ENCODE measurements at regions of chr5 and their contacts with region 1.

Region 1: DNA sequence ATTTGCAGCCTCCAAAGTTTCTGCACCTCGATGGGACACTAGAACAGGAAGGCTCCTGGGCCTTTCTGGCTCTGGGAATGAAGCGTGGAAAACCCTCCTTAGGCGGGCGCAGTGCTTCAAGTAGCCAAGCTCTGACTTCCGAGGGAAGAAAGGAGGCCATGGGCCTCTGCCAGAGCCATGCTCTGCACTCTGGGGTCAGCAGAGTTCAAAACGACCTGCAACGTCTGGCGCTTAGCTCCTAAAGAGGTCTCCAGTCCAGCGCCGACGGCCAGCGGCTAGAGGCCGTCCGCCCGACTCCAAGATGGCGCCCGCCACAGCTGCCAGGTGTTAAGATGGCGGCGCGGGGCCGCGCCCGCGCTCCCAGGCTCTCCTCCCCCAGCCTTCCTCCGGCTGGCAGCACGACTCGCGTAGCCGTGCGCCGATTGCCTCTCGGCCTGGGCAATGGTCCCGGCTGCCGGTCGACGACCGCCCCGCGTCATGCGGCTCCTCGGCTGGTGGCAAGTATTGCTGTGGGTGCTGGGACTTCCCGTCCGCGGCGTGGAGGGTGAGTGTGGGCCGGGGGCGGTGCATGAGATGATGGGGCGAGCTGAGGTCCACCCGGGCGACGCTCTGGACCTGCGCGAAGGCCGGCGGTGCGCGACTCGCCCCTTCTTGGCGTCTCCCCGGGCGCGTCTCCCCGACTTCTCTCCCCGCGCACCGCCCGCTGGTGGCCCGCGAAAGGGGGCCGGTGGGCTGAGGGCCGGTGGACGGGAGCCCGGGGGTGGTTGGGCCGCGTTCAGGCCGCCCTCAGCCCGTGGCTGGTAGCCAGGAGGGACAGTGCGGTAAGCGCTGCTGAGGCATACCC is at the start of gene TXNDC15:
- DNase-seq: peak; percentile 69 to 86 (median 78)
- ATAC-seq: peak; percentile 98
- H3K4me3 ChIP-seq: peak within 1 kb of the TSS; percentile 95
- H3K4me3 Mint-ChIP-seq: peak within 1 kb of the TSS; percentile 89 to 98 (median 94)
- H3K27ac ChIP-seq: peak within 1 kb of the TSS; percentile 88
- H3K27ac Mint-ChIP-seq: peak within 1 kb of the TSS; percentile 91 to 97 (median 95)
- H3K4me1 ChIP-seq: peaks cover 16 to 32% of the 10 kb centered on the region in 2 donors
- H3K4me1 Mint-ChIP-seq: peaks cover 31 to 51% (median 45%) of the 10 kb centered on the region in 7 donors
- H3K27me3 ChIP-seq: no peaks in the 10 kb centered on the region
- H3K27me3 Mint-ChIP-seq: no peaks in the 10 kb centered on the region
- total RNA-seq, gene TXNDC15: 24.2 to 71.3 (median 36.8) TPM

Region 2: GRCh38 chr5:134758504-134759341 is 115.5 kb before region 1 on chr5 and contains the start of gene DDX46:
- CTCF ChIA-PET with region 1: no interaction called
- POLR2A ChIA-PET with region 1: no interaction called
- intact Hi-C with region 1: loop called in 1 of 2 experiments (anchors 1 kb)
- DNase-seq: peak; percentile 85 to 95 (median 91)
- ATAC-seq: peak; percentile 99
- H3K4me3 ChIP-seq: peak within 1 kb of the TSS; percentile 75
- H3K4me3 Mint-ChIP-seq: peak within 1 kb of the TSS; percentile 92 to 100 (median 99)
- H3K27ac ChIP-seq: peak within 1 kb of the TSS; percentile 87
- H3K27ac Mint-ChIP-seq: peak within 1 kb of the TSS; percentile 93 to 99 (median 97)
- H3K4me1 ChIP-seq: peaks cover 12 to 13% of the 10 kb centered on the region in 2 donors
- H3K4me1 Mint-ChIP-seq: peaks cover 20 to 47% (median 38%) of the 10 kb centered on the region in 7 donors
- H3K27me3 ChIP-seq: no peaks in the 10 kb centered on the region
- H3K27me3 Mint-ChIP-seq: no peaks in the 10 kb centered on the region
- total RNA-seq, gene DDX46: 51.2 to 72.5 (median 64.2) TPM

Region 3: GRCh38 chr5:136516637-136517036 is 1642.4 kb after region 1 on chr5:
- CTCF ChIA-PET with region 1: no interaction called
- POLR2A ChIA-PET with region 1: no interaction called
- intact Hi-C with region 1: no loop called
- DNase-seq: no peak
- ATAC-seq: peak; percentile 18
- H3K4me3 ChIP-seq: no peak overlapping the region
- H3K4me3 Mint-ChIP-seq: no peak overlapping the region
- H3K27ac ChIP-seq: no peak overlapping the region
- H3K27ac Mint-ChIP-seq: no peak overlapping the region
- H3K4me1 ChIP-seq: no peaks in the 10 kb centered on the region
- H3K4me1 Mint-ChIP-seq: peaks cover 0 to 2% (median 0%) of the 10 kb centered on the region in 7 donors
- H3K27me3 ChIP-seq: no peaks in the 10 kb centered on the region
- H3K27me3 Mint-ChIP-seq: peaks cover 0 to 6% (median 0%) of the 10 kb centered on the region in 5 donors

Measured in naive thymus-derived CD4-positive, alpha-beta T cell (primary cell).